ENCODE measurements at regions of chr3 and their contacts with region 1.

Region 1: GRCh38 chr3:53195602-53196574 is 34.9 kb downstream of the PRKCD start:
- DNase-seq: no peak
- H3K4me3 ChIP-seq: no peak overlapping the region
- CTCF ChIP-seq: peak; percentile 99

Region 2: DNA sequence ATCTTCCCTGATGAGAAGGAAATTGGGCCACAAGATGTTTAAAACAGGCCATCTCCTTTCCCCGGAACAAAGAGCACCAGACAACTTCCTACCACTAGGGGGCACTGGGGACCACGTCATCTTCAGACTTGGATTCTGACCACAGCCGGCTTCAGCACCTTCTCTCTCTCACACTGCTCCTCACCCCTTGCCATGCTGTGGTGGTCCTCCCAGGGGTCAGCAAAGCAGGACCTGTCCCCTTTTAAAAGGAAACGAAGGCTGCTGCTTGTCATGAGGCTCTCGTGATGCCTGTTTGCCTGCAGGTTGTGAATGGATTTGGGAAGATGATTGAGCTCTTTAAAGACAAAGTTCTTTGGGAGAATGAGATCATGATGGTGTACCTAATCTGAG is 81.9 kb before region 1 on chr3:
- CTCF ChIA-PET with region 1: interaction called, 218 read pairs
- POLR2A ChIA-PET with region 1: no interaction called
- DNase-seq: no peak
- H3K4me3 ChIP-seq: no peak overlapping the region
- CTCF ChIP-seq: peak; percentile 92

Region 3: DNA sequence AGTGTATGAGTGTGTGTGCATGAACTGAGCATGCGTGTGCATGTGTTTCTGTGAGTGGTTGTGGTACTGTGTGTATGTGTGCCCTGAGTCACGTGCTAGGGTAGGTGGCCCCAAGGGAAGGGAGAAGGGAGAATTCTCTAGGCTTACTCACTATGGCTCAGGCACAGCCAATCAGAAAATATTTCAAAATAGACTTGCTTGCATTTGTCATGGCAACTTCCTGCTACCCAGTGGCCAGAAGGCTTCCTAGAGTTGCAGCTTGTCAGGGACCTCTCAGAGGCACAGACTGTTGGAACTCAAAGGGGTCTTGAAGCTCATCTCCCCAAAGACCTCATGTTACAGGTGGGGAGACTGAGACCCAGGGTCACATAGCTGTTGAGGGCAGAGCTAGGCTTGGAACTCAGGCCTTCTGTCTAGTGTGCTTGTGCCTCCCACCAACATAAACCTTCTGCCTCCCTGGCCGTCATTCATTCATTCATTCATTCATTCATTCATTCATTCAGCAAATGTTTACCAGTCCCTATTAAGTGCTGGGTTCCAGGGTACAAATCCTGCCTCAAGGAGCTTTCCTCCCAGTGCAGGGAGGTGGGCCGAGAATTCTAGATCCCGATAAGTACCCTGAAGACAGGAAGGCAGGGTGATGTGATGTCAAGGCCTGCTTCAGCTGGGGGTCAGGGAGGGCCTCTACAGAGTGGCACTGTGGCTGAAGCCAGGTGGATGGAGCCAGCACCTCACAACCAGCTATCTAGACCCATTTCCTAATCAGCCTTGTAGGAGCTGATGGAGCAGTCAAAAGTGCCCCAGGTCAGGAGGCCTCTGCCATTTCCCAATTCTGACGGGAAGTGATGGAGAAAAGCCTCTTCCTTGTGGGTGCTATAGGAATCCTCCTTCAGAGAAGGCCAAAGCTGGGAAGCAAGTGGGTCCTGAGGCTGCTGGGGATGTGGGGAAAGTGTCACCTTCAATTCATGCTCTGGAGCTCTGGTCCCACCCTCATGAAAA is 54.7 kb before region 1 on chr3:
- CTCF ChIA-PET with region 1: interaction called, 245 read pairs
- POLR2A ChIA-PET with region 1: no interaction called
- DNase-seq: peak; percentile 38
- H3K4me3 ChIP-seq: no peak overlapping the region
- CTCF ChIP-seq: no peak

Region 4: GRCh38 chr3:53150247-53151085 is 45.4 kb before region 1 on chr3:
- CTCF ChIA-PET with region 1: interaction called, 20 read pairs
- POLR2A ChIA-PET with region 1: no interaction called
- DNase-seq: no peak
- H3K4me3 ChIP-seq: no peak overlapping the region
- CTCF ChIP-seq: no peak

Region 5: DNA sequence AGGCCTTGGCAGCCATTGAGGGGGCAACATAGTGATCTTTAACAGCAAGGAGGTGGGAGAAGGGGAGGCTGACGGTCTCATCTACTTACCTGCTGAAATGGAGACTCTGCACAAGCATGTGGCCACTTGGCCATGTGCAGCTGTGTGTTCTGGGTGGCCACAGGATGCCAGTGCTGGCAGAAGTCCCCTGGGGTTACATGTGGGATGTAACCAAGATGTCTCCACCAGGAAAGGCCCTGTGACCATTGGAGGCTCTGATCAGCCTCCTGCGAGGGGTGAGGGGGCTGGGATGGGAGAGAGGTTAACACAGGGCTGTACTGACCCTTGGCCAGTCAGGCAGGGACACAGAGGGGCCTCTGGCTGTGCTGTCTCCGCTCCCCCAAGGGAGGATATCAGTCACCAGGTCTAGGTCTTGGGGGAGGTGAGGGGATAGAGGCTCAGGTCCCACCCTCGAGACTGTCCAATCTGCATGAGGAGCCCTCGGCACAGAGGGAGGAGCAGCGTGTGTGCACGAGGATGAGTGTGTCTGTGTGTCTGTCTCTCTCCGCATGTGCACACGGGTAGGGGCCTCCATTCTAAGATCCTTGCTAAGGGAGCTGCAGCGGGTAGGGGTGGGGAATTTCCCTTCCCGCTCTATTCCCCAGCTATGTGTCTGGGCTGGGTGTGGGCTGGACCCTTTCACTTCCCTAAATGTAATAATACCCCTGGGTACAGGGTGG is 15.4 kb before region 1 on chr3:
- CTCF ChIA-PET with region 1: interaction called, 22 read pairs
- POLR2A ChIA-PET with region 1: no interaction called
- DNase-seq: no peak
- H3K4me3 ChIP-seq: no peak overlapping the region
- CTCF ChIP-seq: no peak

Region 6: GRCh38 chr3:53219895-53220483 is 24.1 kb after region 1 on chr3:
- CTCF ChIA-PET with region 1: interaction called, 23 read pairs
- POLR2A ChIA-PET with region 1: no interaction called
- DNase-seq: no peak
- H3K4me3 ChIP-seq: no peak overlapping the region
- CTCF ChIP-seq: peak; percentile 98

Measured in AG04449 (cell line).